ENCODE measurements at regions of chr7 and their contacts with region 1.

Region 1: DNA sequence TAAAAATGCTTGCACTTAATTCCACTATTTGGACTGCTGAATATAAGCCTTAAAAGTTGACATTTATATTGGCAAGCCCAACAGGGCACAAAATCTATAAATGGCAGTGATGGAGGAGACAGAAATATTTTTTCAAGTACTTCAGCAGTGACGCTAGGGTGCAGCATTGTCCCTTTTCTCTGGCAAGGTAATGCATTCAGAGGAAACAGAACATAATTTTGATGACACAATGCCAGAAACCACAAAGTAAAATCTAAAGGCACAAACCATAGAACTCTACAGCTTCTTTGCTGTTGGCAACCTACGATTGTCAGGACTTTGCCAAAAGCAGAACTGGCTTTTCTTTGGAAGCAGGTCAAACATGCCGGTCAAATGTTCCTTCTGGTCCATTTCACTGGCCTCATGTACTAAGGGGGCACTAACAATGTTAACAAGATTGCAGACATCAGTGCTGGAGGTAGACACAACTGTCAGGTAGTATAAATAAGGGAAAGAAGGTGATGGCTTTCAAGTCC is 30.9 kb upstream of the FAM133B start:
- DNase-seq: peak; percentile 49
- CTCF ChIP-seq: peak; percentile 73

Region 2: GRCh38 chr7:92582948-92583347 is 38.1 kb before region 1 on chr7:
- CTCF ChIA-PET with region 1: no interaction called
- POLR2A ChIA-PET with region 1: no interaction called
- DNase-seq: no peak
- CTCF ChIP-seq: no peak

Region 3: DNA sequence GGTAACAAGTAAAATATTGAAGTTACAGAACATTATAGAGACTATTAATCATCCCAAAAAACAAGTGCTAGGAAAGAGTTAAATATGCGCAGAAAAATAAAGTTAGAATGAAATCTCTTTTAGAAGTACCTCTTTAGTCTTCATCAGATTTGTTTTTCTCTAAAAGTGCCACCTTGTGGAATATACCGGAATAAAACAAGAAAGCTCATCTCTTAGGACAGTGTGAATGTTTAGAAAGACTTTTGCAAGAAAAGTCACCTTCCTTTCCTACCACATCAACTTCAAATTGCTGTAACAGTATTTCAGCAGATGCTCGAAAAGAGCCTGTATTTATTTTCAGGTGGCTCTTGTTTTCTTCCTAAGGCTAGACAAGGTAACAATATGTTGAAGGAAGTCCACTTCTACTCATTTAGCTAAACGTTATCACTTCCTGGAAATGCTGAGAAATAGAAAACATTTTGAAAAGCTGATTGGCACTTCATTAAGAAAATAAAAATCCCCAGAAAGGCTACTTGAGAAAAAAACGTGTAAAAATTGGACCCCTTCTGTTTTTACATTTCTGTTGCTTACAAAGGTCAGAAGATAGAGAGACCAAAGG is 11.1 kb before region 1 on chr7:
- CTCF ChIA-PET with region 1: interaction called, 57 read pairs
- POLR2A ChIA-PET with region 1: no interaction called
- DNase-seq: no peak
- CTCF ChIP-seq: peak; percentile 42

Region 4: GRCh38 chr7:92633211-92633906 is 12.3 kb after region 1 on chr7:
- CTCF ChIA-PET with region 1: interaction called, 29 read pairs
- POLR2A ChIA-PET with region 1: no interaction called
- DNase-seq: no peak
- CTCF ChIP-seq: no peak

Region 5: DNA sequence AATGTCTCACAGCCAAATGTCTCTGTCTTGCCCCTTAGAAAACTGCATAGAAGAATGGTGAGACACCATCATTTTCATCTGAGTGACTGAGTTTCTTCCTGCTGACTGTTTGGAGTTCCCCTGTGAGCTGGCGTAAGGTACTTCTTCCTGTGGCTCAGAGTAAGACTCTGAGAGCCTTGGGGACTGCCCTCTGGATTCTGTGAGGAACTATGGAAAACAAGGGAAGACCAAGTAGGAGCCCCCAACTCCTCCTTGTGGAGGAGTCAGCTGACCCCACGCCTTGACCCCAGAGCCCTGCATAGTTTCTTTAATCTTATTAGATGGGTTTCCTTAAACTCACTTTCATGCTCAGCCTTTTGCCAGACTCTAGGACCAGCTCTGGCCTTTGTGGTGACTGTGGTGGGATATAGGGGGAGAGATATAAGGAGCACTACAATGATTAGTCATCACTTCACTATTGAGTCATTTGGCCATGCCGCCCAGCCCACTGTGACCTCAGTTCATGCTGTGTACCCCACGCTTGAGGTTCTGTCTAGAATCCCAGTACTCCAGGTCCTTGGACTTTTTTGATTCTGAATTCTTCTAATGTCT is 20.9 kb after region 1 on chr7:
- CTCF ChIA-PET with region 1: interaction called, 10 read pairs
- POLR2A ChIA-PET with region 1: no interaction called
- DNase-seq: no peak
- CTCF ChIP-seq: no peak

Region 6: DNA sequence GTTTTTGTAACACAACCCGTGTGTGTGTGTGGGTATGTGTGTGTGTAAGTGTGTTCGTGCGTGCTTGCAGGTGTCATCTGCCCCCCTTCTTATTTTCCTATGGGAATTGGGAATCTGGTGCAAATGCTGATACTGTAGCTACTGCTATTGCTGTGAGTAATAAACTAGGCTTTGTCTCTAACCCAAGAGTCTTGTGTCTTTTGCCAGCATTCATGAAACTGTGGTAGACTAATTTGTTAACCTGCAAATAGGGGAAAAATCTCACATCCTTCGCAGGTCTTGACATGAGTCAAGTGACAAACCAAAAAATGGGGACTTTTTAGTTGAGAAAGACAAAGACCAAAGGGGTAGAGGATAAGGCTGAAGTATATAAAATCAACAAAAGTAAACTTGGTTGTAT is 27.0 kb after region 1 on chr7:
- CTCF ChIA-PET with region 1: interaction called, 11 read pairs
- POLR2A ChIA-PET with region 1: no interaction called
- DNase-seq: peak; percentile 35
- CTCF ChIP-seq: no peak